ENCODE measurements at regions of chr11 and their contacts with region 1.

Region 1: GRCh38 chr11:122781378-122782195 is 56.7 kb upstream of the CRTAM start:
- DNase-seq: peak; percentile 85
- ATAC-seq: peak; percentile 88
- H3K4me3 Mint-ChIP-seq: no peak overlapping the region
- H3K27ac Mint-ChIP-seq: no peak overlapping the region
- H3K4me1 Mint-ChIP-seq: peaks cover 19% of the 10 kb centered on the region
- H3K27me3 Mint-ChIP-seq: no peaks in the 10 kb centered on the region
- CTCF ChIP-seq: peak; percentile 92

Region 2: DNA sequence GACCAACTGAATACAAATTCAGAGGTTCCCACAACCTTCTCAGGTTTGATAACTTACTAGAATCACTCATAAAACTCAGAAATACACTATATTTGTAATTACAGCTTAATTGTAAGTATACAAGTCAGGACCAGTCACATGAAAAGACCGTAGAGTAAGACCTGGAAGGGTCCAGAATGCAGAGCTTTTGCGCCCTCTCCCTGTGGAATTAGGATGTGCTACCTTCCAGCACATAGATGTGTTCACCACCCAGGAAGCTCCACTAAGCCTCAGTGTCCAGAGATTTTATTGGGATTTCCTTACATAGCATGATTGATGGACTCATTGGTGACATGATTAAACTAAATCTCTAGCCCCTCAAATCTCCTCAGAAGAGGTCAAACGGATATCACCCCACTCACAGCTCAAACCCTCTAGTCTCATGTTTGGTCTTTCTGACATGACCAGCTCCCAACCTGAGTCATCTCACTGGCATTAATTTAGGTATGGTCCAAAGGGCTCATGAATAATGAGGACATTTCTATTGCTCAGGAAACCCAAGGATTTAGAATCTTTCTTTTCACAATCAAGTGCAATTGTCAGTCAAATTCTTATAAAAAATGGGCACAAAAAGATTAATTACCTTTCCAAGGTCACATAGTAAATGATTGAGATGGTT is 203.3 kb before region 1 on chr11:
- CTCF ChIA-PET with region 1: interaction called, 52 read pairs
- POLR2A ChIA-PET with region 1: no interaction called
- intact Hi-C with region 1: loop called (anchors 5 kb)
- DNase-seq: peak; percentile 19
- ATAC-seq: no peak
- H3K4me3 Mint-ChIP-seq: no peak overlapping the region
- H3K27ac Mint-ChIP-seq: no peak overlapping the region
- H3K4me1 Mint-ChIP-seq: peaks cover 10% of the 10 kb centered on the region
- H3K27me3 Mint-ChIP-seq: peaks cover 1% of the 10 kb centered on the region
- CTCF ChIP-seq: no peak

Region 3: DNA sequence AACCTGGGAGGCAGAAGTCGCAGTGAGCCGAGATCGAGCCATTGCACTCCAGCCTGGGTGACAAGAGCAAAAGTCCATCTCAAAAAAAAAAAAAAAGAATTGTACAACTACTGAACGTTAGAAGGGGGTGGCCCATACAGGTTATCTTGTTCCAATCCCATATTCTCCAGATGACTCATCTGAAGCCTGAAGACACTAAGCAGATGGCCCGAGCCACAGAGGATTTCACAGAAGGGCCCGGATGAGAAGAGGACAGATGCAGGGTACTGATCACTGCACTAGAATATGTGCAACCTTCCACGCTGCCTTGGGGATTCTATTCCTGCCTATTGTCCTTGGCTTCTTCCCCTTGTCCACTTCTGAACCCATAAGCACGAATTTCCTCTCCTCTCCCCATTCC is 196.9 kb before region 1 on chr11:
- CTCF ChIA-PET with region 1: interaction called, 52 read pairs
- POLR2A ChIA-PET with region 1: no interaction called
- intact Hi-C with region 1: loop called (anchors 5 kb)
- DNase-seq: no peak
- ATAC-seq: no peak
- H3K4me3 Mint-ChIP-seq: no peak overlapping the region
- H3K27ac Mint-ChIP-seq: no peak overlapping the region
- H3K4me1 Mint-ChIP-seq: peaks cover 10% of the 10 kb centered on the region
- H3K27me3 Mint-ChIP-seq: peaks cover 9% of the 10 kb centered on the region
- CTCF ChIP-seq: no peak

Region 4: GRCh38 chr11:122655527-122656072 is 126.0 kb before region 1 on chr11 and contains the start of gene UBASH3B:
- CTCF ChIA-PET with region 1: interaction called, 26 read pairs
- POLR2A ChIA-PET with region 1: interaction called, 4 read pairs
- intact Hi-C with region 1: no loop called
- DNase-seq: peak; percentile 76
- ATAC-seq: peak; percentile 75
- H3K4me3 Mint-ChIP-seq: peak within 1 kb of the TSS; percentile 97
- H3K27ac Mint-ChIP-seq: peak within 1 kb of the TSS; percentile 91
- H3K4me1 Mint-ChIP-seq: peaks cover 31% of the 10 kb centered on the region
- H3K27me3 Mint-ChIP-seq: no peaks in the 10 kb centered on the region
- CTCF ChIP-seq: peak; percentile 11
- total RNA-seq, gene UBASH3B: 36.1 to 40.6 TPM

Region 5: DNA sequence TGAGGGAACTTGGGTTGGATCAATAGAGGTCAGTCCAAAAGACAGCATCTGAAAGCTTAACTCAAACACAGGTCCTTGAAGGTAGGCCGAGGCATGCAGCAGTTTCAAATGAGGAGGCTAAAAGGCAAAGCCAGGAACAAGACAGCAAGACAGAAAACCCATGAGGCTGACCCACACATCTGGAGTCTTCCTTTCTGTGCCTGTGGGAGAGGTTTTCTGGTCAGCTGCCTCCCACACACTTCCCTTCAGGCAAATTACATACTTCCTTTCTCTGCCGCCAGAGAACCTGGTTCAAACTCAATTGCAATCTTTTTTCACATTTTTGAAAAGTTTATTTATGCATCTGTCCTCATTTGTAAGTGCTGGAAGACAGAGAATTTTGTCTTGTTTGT is 26.9 kb after region 1 on chr11:
- CTCF ChIA-PET with region 1: interaction called, 10 read pairs
- POLR2A ChIA-PET with region 1: no interaction called
- intact Hi-C with region 1: no loop called
- DNase-seq: peak; percentile 56
- ATAC-seq: peak; percentile 49
- H3K4me3 Mint-ChIP-seq: peak overlapping the region; percentile 55
- H3K27ac Mint-ChIP-seq: peak overlapping the region; percentile 76
- H3K4me1 Mint-ChIP-seq: peaks cover 65% of the 10 kb centered on the region
- H3K27me3 Mint-ChIP-seq: no peaks in the 10 kb centered on the region
- CTCF ChIP-seq: no peak

Region 6: DNA sequence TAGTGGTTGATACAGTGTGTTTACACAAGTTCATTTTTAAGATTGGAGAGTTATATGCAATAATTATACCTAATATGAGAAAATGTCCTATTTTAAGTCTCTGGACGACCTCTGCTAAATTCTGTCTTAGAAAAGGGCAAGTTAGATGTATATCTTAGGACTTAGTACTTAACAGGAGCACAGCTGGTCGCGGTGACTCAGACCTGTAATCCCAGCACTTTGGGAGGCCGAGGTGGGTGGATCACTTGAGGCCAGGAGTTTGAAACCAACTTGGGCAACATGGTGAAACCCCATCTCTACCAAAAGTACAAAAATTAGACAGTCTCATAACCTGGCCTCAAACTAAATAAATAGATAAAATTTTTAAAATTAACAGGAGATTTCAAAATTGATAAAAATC is 172.9 kb after region 1 on chr11:
- CTCF ChIA-PET with region 1: no interaction called
- POLR2A ChIA-PET with region 1: no interaction called
- intact Hi-C with region 1: no loop called
- DNase-seq: no peak
- ATAC-seq: no peak
- H3K4me3 Mint-ChIP-seq: no peak overlapping the region
- H3K27ac Mint-ChIP-seq: no peak overlapping the region
- H3K4me1 Mint-ChIP-seq: peaks cover 4% of the 10 kb centered on the region
- H3K27me3 Mint-ChIP-seq: no peaks in the 10 kb centered on the region
- CTCF ChIP-seq: no peak

Measured in activated CD8-positive, alpha-beta T cell treated with anti-CD3 and anti-CD28 coated beads for 36 hours (primary cell).